ENCODE measurements at regions of chr12 and their contacts with region 1.

Region 1: GRCh38 chr12:16359512-16360491 is 12.4 kb downstream of the MGST1 start:
- DNase-seq: peak; percentile 70
- H3K4me3 ChIP-seq: no peak overlapping the region
- H3K27ac ChIP-seq: peak overlapping the region; percentile 31
- H3K4me1 ChIP-seq: peaks cover 12% of the 10 kb centered on the region
- H3K27me3 ChIP-seq: no peaks in the 10 kb centered on the region

Region 2: DNA sequence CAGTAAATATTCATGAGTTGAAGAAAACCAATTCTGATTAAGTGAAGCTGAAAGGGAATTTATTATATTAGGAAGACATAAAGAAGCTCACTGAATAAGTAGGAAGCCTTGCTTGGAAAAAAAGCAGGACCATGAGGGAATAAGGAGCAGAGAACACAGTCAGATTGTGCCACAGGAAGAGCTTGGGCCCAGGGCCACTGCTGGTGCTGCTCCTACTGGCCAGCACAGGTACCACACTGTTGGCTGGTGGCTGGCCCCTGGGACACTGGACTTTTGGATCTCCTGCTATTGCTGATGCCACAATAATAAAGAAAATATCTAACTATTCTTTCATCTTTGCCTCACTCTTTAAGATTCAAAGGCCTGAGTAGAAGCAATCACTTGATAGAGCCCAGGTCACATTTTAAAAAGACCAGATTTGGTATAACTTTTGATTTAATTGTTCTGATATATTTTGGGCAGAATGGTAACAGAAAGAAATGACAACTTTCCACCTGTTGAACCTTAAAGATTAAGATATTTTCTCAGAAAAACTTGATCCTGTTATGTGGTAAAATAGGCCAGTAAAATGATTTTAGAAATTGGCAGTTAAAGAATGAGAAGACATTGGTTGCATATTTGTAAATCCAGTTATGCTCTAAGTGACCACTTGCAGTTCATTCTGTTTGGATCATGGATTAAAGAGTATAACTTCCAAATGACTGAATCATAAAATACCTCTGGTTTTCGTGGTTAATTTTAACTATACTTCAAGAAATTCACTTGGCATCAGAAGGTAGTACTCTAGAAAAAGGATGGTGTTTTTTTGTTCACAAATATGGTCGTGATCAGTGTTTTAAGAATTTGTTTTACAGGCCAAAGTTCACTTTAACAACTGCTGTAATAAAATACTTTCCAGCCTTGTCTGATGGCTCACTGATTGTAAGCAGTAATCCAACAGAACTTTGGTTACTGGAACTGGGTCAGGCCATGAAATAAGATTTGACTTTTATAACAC is 380.4 kb before region 1 on chr12:
- in situ Hi-C with region 1: loop called (anchors 10 kb)
- DNase-seq: peak; percentile 90
- H3K4me3 ChIP-seq: peak overlapping the region; percentile 31; the same call in 1 of the 2 replicates
- H3K27ac ChIP-seq: peak overlapping the region; percentile 70
- H3K4me1 ChIP-seq: peaks cover 62% of the 10 kb centered on the region
- H3K27me3 ChIP-seq: no peaks in the 10 kb centered on the region

Region 3: GRCh38 chr12:16272222-16272621 is 87.6 kb before region 1 on chr12:
- in situ Hi-C with region 1: no loop called
- DNase-seq: peak; percentile 40
- H3K4me3 ChIP-seq: no peak overlapping the region
- H3K27ac ChIP-seq: no peak overlapping the region
- H3K4me1 ChIP-seq: peaks cover 6% of the 10 kb centered on the region; the same call in 1 of the 2 replicates
- H3K27me3 ChIP-seq: no peaks in the 10 kb centered on the region

Measured in GM23248 (cell line).